ENCODE measurements at regions of chr9 and their contacts with region 1.

Region 1: DNA sequence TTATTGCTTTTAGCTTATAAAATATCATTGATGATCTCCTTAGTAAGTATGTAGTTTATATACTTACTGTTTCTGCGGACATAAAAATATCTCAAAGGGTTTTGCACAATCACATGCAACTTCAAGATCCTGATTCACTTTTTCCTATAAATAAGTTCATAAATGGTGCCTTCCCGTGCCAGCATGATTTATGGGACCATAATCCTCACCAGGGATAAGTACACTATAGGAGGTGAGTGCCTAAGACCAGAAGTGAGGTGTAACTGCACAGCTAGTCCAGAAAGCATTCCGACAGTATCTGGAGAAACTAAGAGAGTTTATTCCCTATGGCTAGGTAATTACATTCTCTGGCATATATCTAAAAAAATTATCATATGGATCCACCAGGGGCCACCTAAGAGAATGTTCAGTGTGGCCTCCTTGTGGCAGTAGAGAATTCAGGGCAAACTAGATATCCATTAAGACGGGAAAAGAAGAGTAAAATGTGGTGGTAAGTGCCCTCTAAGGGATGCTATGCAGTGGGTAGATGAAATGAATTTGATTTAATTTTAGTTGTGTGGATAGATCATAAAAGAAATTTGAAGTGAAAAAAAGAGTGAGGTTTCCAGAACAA is 402.5 kb upstream of the SLC24A2 start:
- H3K4me3 Mint-ChIP-seq: no peak overlapping the region
- H3K27ac Mint-ChIP-seq: no peak overlapping the region
- H3K4me1 Mint-ChIP-seq: no peaks in the 10 kb centered on the region
- H3K27me3 Mint-ChIP-seq: peaks cover 2% of the 10 kb centered on the region

Region 2: GRCh38 chr9:19885608-19886007 is 305.7 kb before region 1 on chr9:
- intact Hi-C with region 1: no loop called
- H3K4me3 Mint-ChIP-seq: no peak overlapping the region
- H3K27ac Mint-ChIP-seq: no peak overlapping the region
- H3K4me1 Mint-ChIP-seq: no peaks in the 10 kb centered on the region
- H3K27me3 Mint-ChIP-seq: no peaks in the 10 kb centered on the region

Region 3: DNA sequence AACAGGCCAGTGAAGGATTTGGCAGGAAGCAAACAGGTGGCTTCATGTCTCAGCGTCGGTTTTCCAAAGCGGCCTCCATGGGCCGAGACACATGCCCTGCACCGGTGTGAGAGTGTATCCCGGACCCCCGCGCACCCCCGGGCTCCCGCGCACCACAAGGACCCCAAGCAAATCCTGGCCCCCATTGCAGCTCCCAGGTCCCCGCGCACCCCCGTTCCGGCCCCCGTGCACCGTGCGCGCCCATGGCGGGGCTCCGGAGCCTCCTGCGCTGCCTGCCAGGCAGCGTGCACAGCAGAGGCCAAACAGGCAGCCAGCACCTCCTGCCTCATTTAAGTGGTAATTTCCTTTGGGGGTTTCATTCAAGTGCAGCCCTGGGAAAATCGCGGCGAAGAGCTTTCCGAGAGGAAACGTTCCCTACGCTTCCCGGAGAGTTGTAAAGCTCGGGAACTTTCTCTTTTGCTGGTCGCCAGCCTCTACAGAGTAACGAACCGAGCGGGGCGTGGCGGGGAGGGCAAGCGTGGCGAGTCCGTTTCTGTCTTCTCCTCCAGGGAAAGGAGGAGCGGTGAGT is 256.9 kb before region 1 on chr9:
- intact Hi-C with region 1: loop called (anchors 5 kb)
- H3K4me3 Mint-ChIP-seq: peak overlapping the region; percentile 72
- H3K27ac Mint-ChIP-seq: peak overlapping the region; percentile 18
- H3K4me1 Mint-ChIP-seq: peaks cover 28% of the 10 kb centered on the region
- H3K27me3 Mint-ChIP-seq: peaks cover 10% of the 10 kb centered on the region

Region 4: DNA sequence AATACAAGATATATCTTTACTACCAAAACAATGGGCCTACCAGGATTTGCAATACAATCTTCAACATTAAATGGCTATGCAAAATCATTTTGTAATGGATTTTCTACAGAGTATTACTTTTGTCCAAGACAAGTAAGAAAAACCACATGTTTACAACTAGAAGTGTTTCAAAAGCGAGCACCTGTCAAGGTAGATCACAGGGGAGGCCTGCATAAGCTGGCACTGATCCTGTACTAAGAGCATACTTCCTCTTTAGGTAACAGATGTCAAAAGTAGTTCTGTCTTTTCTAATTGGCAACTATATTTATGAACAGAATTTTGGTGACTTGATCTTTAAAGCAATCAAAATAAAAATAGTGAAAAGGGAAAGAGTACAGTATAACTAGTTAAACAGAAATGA is 181.9 kb after region 1 on chr9:
- intact Hi-C with region 1: no loop called
- H3K4me3 Mint-ChIP-seq: no peak overlapping the region
- H3K27ac Mint-ChIP-seq: no peak overlapping the region
- H3K4me1 Mint-ChIP-seq: peaks cover 6% of the 10 kb centered on the region
- H3K27me3 Mint-ChIP-seq: no peaks in the 10 kb centered on the region